ENCODE measurements at regions of chr4 and their contacts with region 1.

Region 1: GRCh38 chr4:54333657-54334056 is 104.6 kb downstream of the PDGFRA start:
- DNase-seq: no peak
- ATAC-seq: no peak
- H3K4me3 ChIP-seq: no peak overlapping the region
- H3K27ac ChIP-seq: no peak overlapping the region
- H3K4me1 ChIP-seq: peaks cover 0 to 13% (median 0%) of the 10 kb centered on the region in 9 donors
- H3K27me3 ChIP-seq: no peaks in the 10 kb centered on the region
- CTCF ChIP-seq: no peak

Region 2: GRCh38 chr4:54400802-54401201 is 67.1 kb after region 1 on chr4:
- intact Hi-C with region 1: loop called in 1 of 10 experiments (anchors 2 kb)
- DNase-seq: peak in 1 of 2 donors; percentile 16
- ATAC-seq: peak in 5 of 8 donors; percentile 31 to 65 (median 56)
- H3K4me3 ChIP-seq: no peak overlapping the region
- H3K27ac ChIP-seq: no peak overlapping the region
- H3K4me1 ChIP-seq: peaks cover 0 to 33% (median 0%) of the 10 kb centered on the region in 9 donors
- H3K27me3 ChIP-seq: no peaks in the 10 kb centered on the region
- CTCF ChIP-seq: no peak

Region 3: DNA sequence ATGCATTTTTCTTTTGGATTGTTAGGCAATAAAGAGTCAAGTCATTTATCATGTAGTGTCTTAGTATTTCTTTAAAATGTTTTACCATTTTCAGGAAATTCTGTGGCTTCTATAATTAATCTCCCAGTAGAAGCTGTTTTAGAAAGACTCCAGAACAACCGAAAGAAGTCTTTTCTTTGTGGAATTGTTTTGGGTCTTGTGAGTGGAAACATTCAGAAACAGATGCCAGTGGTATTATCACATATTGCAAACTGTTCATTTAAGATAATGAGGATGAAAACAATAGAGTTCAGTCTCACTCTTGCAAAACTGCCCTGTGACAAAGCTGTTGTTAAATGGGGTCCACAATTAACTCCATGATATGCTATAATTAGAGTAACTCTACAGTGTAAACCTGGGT is 112.9 kb after region 1 on chr4:
- intact Hi-C with region 1: loop called in 1 of 10 experiments (anchors 5 kb)
- DNase-seq: no peak
- ATAC-seq: no peak
- H3K4me3 ChIP-seq: no peak overlapping the region
- H3K27ac ChIP-seq: no peak overlapping the region
- H3K4me1 ChIP-seq: no peaks in the 10 kb centered on the region
- H3K27me3 ChIP-seq: no peaks in the 10 kb centered on the region
- CTCF ChIP-seq: no peak

Region 4: GRCh38 chr4:54482529-54483200 is 149.0 kb after region 1 on chr4:
- intact Hi-C with region 1: no loop called
- DNase-seq: no peak
- ATAC-seq: no peak
- H3K4me3 ChIP-seq: no peak overlapping the region
- H3K27ac ChIP-seq: no peak overlapping the region
- H3K4me1 ChIP-seq: no peaks in the 10 kb centered on the region
- H3K27me3 ChIP-seq: no peaks in the 10 kb centered on the region
- CTCF ChIP-seq: no peak